T-cell (primary cell): ENCODE measurements at regions of chr13 and their contacts with region 1.

Region 1: GRCh38 chr13:80341101-80341755 is at the start of gene SPRY2:
- DNase-seq: peak in 6 of 35 experiments; percentile 3 to 51 (median 12)
- ATAC-seq: peak; percentile 7 to 44 (median 32)
- H3K4me3 ChIP-seq: peak within 1 kb of the TSS; percentile 46 to 98
- H3K4me3 Mint-ChIP-seq: peak within 1 kb of the TSS in 2 of 3 donors; percentile 68 to 70
- H3K27ac ChIP-seq: no peak within 1 kb of the TSS
- H3K27ac Mint-ChIP-seq: no peak within 1 kb of the TSS
- H3K4me1 ChIP-seq: peaks cover 5 to 33% of the 10 kb centered on the region in 2 experiments
- H3K4me1 Mint-ChIP-seq: peaks cover 18 to 23% (median 22%) of the 10 kb centered on the region in 3 donors
- H3K27me3 ChIP-seq: peaks cover 0 to 52% of the 10 kb centered on the region in 2 experiments
- H3K27me3 Mint-ChIP-seq: peaks cover 42 to 46% of the 10 kb centered on the region in 2 donors
- total RNA-seq, gene SPRY2: 0.33 to 1.2 (median 0.55) TPM

Region 2: GRCh38 chr13:79295906-79296706 is 1045.1 kb before region 1 on chr13:
- CTCF ChIA-PET with region 1: no interaction called
- POLR2A ChIA-PET with region 1: no interaction called
- DNase-seq: no peak
- ATAC-seq: no peak
- H3K4me3 ChIP-seq: no peak overlapping the region
- H3K4me3 Mint-ChIP-seq: no peak overlapping the region
- H3K27ac ChIP-seq: no peak overlapping the region
- H3K27ac Mint-ChIP-seq: no peak overlapping the region
- H3K4me1 ChIP-seq: no peaks in the 10 kb centered on the region
- H3K4me1 Mint-ChIP-seq: no peaks in the 10 kb centered on the region
- H3K27me3 ChIP-seq: peaks cover 0 to 8% of the 10 kb centered on the region in 2 experiments
- H3K27me3 Mint-ChIP-seq: peaks cover 13 to 18% of the 10 kb centered on the region in 2 donors

Region 3: GRCh38 chr13:80214521-80214991 is 126.7 kb before region 1 on chr13:
- CTCF ChIA-PET with region 1: interaction called in 1 of 2 experiments, 11 read pairs
- POLR2A ChIA-PET with region 1: no interaction called
- DNase-seq: no peak
- ATAC-seq: no peak
- H3K4me3 ChIP-seq: no peak overlapping the region
- H3K4me3 Mint-ChIP-seq: no peak overlapping the region
- H3K27ac ChIP-seq: no peak overlapping the region
- H3K27ac Mint-ChIP-seq: no peak overlapping the region
- H3K4me1 ChIP-seq: no peaks in the 10 kb centered on the region
- H3K4me1 Mint-ChIP-seq: no peaks in the 10 kb centered on the region
- H3K27me3 ChIP-seq: no peaks in the 10 kb centered on the region
- H3K27me3 Mint-ChIP-seq: no peaks in the 10 kb centered on the region